GM13977 (cell line): ENCODE measurements at regions of chr10 and their contacts with region 1.

Region 1: DNA sequence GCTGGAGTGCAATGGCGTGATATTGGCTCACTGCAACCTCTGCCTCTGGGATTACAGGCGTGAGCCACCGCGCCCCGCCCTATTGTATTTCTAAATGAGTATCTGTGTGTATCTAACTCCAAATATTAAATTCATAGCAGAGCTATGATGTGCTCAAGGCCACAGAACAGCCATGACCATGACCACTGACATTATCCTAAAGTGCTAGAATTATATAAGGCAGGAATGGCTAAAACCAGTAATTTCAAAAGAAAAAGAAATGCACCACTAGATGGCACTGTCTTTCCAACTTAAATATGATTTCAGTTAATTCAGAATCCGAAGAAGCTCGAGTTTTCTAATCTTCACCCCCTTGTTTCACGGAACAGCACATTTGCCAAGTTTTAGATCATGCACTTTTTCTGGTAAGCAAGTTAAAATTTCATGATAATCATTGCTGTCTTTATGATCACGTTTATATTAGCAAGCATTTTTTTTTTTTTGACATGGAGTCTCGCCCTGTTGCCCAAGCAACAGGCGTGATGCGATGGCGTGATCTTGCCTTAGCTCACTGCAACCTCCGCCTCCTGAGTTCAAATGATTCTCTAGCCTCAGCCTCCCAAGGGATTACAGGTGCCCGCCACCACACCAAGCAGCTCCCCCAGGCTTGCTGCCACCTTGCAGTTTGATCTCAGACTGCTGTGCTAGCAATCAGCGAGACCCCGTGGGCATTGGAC is 65.3 kb downstream of the OR13A1 start:
- DNase-seq: peak; percentile 44
- CTCF ChIP-seq: peak; percentile 45

Region 2: DNA sequence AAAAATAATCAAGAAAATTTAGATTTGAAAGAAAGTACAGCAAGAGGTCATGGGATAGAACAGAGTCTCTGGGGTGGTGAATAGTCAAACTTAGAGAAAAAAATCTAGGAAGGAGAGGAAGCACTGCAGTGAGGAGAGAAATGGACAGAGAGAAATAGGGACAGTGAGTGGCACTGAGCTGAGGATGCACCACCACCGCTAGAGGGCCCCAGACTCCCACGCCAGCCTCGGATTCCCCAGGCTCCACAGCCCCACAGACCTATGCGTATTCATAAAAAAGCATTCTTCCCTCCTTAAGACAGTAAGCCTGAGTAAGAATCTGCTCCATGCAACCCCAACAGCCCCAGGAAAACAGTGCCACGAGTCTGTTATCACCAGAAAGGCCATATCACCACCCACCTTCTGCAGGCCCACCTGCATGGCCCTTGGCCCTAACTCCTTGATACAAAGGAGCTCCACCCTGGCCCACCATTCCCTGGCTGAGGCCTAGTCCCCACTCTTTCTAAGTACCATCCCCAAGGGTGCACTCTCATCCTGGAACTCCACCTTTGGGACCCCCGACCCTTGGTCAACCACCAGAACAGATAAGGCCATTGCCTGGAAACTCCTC is 214.9 kb after region 1 on chr10:
- in situ Hi-C with region 1: loop called (anchors 5 kb)
- DNase-seq: peak; percentile 80
- CTCF ChIP-seq: peak; percentile 96

Region 3: DNA sequence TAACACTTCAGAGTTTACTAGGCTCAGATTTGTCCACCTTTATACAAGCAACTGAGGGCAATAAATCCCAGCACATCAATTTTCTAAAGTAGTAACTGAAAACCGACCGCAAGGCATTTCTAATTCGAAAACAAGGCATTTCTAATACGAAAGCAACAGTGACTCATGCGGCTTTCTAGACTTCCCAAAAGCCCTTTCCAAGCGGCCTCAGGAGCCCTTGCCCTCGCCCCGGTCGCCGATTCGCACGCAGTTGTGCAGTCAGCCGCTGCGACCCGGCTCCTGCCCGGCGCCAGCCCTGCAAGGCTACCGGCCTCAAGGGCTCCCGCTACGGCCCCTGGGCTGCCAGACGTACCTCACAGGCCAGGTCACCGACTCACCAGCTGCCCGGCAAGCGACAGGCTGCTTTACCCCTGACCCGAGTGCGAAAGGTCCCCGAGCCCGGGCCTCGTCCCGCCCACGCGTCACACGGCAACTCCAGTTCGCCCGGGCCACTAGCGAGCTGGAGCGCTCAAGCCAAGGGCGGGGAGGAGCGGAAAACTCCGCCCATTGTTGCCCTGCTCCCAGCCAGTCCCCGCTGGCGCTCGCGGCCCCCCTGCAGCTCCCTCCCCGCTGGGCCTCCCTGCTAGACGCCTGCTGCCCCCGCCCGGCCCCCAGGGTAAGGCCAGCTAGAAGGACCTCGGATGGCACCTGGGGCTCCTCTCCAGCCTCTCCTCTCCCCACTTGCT is 773.0 kb after region 1 on chr10:
- in situ Hi-C with region 1: loop called (anchors 10 kb)
- DNase-seq: peak; percentile 84
- CTCF ChIP-seq: peak; percentile 48

Region 4: DNA sequence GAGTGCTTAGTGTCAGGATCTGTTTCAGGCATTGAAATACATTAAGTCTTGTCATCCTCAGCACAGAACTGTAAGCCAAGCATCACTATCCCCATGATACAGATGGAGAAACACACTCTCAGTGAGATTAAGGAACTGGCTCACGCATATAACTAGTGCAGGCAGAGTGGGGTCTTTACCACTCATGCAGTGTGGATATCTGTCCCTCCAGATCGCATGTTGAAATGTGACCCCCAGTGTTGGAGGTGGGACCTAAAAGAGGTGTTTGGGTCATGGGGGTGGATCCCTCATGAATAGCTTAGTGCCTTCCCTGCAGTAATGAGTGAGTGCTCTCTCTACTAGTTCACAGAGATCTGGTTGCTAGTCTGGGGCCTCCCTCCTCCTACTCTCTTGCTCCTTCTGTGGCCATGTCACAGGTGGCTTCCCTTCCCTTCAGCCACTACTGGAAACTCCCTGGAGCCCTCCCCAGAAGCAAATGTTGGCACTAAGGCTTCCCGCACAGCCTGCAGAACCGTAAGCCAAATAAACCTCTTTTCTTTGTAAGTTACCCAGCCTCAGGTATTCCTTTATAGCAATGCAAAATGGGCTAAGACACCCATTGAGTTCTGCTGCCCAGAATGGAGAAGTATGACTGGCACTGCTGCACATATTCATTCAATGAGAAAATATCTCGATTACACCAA is 827.7 kb after region 1 on chr10:
- in situ Hi-C with region 1: no loop called
- DNase-seq: no peak
- CTCF ChIP-seq: no peak